CD4-positive, alpha-beta T cell (primary cell): ENCODE measurements at regions of chr1 and their contacts with region 1.

Region 1: DNA sequence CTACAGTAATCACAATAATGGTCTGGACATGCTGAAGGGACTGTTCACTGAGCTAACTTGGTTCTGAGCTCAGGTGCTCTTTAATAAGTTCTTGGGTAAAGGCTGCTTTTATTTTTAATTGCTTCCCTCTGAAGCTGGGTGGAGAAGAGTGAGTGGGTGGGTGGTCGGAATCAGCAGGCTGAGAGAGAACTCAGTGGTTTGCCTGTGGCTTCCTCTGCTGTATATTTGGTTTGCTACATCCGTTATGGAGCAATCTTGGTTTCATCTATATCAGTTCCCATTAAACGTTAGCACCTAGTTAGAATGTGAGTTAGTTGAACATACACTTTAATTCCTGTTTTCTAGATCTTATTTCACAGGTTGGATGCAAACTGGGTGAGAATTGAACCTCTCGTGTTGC is 23.3 kb downstream of the CNIH4 start:
- DNase-seq: peak in 8 of 14 experiments; percentile 17 to 83 (median 43)
- ATAC-seq: peak; percentile 87
- H3K4me3 ChIP-seq: peak overlapping the region; percentile 13
- H3K4me3 Mint-ChIP-seq: peak overlapping the region; percentile 83
- H3K27ac ChIP-seq: peak overlapping the region in 1 of 2 donors; percentile 12
- H3K27ac Mint-ChIP-seq: peak overlapping the region; percentile 75
- H3K4me1 ChIP-seq: peaks cover 53% of the 10 kb centered on the region
- H3K4me1 Mint-ChIP-seq: peaks cover 80% of the 10 kb centered on the region
- H3K27me3 ChIP-seq: no peaks in the 10 kb centered on the region
- H3K27me3 Mint-ChIP-seq: no peaks in the 10 kb centered on the region
- CTCF ChIP-seq: no peak

Region 2: GRCh38 chr1:224356685-224357625 is 23.0 kb before region 1 on chr1 and contains the start of gene CNIH4:
- CTCF ChIA-PET with region 1: interaction called, 3 read pairs
- POLR2A ChIA-PET with region 1: interaction called, 9 read pairs
- intact Hi-C with region 1: loop called in 1 of 2 experiments (anchors 2 kb)
- DNase-seq: peak; percentile 83 to 97 (median 88)
- ATAC-seq: peak; percentile 99
- H3K4me3 ChIP-seq: peak within 1 kb of the TSS; percentile 80
- H3K4me3 Mint-ChIP-seq: peak within 1 kb of the TSS; percentile 99
- H3K27ac ChIP-seq: peak within 1 kb of the TSS; percentile 56 to 72
- H3K27ac Mint-ChIP-seq: peak within 1 kb of the TSS; percentile 80
- H3K4me1 ChIP-seq: peaks cover 40% of the 10 kb centered on the region
- H3K4me1 Mint-ChIP-seq: peaks cover 45% of the 10 kb centered on the region
- H3K27me3 ChIP-seq: no peaks in the 10 kb centered on the region
- H3K27me3 Mint-ChIP-seq: no peaks in the 10 kb centered on the region
- CTCF ChIP-seq: no peak
- total RNA-seq, gene CNIH4: 31.2 to 33.6 TPM

Region 3: DNA sequence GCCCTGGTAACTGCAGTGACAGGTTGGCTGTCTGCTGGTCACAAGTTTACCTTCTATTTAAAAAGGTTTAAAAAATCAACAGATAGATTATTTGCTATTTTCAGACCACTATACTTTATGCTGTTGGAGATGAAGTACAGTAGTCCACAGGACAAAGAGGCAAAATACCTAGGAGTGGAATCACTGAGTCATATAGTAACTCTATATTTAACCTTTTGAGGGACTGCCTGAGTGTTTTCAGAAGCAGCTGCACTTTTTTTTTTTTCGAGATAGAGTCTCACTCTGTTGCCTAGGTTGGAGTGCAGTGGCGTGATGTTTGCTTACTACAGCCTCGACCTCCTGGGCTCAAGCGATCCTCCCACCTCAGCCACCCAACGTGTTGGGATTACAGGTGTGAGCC is 11.6 kb before region 1 on chr1:
- CTCF ChIA-PET with region 1: interaction called, 4 read pairs
- POLR2A ChIA-PET with region 1: interaction called, 12 read pairs
- intact Hi-C with region 1: no loop called
- DNase-seq: no peak
- ATAC-seq: no peak
- H3K4me3 ChIP-seq: no peak overlapping the region
- H3K4me3 Mint-ChIP-seq: no peak overlapping the region
- H3K27ac ChIP-seq: no peak overlapping the region
- H3K27ac Mint-ChIP-seq: no peak overlapping the region
- H3K4me1 ChIP-seq: peaks cover 8% of the 10 kb centered on the region
- H3K4me1 Mint-ChIP-seq: peaks cover 62% of the 10 kb centered on the region
- H3K27me3 ChIP-seq: no peaks in the 10 kb centered on the region
- H3K27me3 Mint-ChIP-seq: no peaks in the 10 kb centered on the region
- CTCF ChIP-seq: no peak